OCI-LY7 (cell line): ENCODE measurements at regions of chr9 and their contacts with region 1.

Region 1: GRCh38 chr9:30178586-30178985 is 2205.9 kb upstream of the ACO1 start:
- DNase-seq: no peak
- H3K4me3 ChIP-seq: no peak overlapping the region
- H3K27ac ChIP-seq: no peak overlapping the region
- H3K4me1 ChIP-seq: no peaks in the 10 kb centered on the region
- CTCF ChIP-seq: no peak

Region 2: DNA sequence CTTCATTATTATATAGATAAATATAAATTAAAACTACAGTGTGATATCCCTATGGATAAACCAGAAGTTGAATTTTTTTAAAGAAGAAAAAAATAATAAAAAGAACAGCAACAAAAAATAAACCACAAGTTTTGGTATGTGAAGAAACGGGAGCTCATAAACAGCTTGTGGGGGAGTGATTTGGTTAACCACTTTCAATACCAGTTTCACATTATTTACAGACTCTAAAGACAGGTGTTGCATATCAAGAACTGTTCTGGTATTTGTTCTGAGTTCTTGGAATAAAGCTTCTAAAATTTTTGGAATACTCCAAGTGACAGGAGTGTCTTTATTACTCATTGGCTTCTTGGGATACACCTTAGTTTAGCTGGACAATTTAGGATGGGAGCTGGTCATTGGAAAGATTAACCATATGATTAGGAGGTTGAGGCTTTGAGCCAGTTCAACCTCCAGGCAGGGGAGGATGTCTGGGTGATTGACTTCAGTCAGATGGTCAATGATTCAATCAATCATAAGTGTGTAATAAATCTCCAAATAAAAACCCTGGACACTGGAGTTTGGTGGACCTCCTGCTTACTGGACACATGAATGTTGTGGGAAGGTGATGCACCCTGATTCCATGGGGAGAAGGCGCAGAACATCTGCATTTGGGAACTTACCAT is 382.2 kb before region 1 on chr9:
- CTCF ChIA-PET with region 1: no interaction called
- POLR2A ChIA-PET with region 1: interaction called, 12 read pairs
- intact Hi-C with region 1: no loop called
- DNase-seq: no peak
- H3K4me3 ChIP-seq: no peak overlapping the region
- H3K27ac ChIP-seq: no peak overlapping the region
- H3K4me1 ChIP-seq: no peaks in the 10 kb centered on the region
- CTCF ChIP-seq: no peak